AG04449 (cell line): ENCODE measurements at regions of chr1 and their contacts with region 1.

Region 1: DNA sequence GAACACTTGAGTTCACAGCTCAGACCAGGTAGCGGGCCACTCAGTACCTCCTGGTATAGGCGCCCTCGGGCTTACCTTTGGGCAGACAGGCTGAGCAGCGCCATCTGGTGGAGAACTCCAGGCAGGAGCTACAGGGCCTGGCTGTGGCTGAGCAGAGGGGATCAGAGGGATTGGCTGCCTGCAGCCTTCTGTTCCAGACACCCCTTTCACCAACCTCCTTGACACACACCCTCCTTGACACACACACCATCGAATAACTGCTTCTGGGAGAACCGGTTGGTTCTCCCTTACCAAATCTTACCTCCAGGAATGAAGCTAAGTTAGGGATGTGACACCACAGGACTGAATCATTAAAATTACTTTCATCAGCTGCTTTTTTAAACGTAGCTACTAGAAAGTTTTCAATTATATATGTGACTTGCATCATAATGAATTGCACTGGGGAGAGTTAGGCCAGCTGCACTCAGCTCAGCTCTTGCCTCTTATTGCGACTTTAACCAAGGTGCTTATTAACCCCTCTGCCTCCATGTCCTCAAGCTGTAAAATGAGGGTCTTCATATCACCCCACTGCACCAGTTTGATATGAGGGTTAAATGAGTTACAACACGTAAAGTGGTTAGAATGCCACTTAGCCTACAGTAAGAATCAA is 6.6 kb downstream of the LIN28A start:
- DNase-seq: no peak
- H3K4me3 ChIP-seq: no peak overlapping the region
- CTCF ChIP-seq: peak; percentile 97

Region 2: DNA sequence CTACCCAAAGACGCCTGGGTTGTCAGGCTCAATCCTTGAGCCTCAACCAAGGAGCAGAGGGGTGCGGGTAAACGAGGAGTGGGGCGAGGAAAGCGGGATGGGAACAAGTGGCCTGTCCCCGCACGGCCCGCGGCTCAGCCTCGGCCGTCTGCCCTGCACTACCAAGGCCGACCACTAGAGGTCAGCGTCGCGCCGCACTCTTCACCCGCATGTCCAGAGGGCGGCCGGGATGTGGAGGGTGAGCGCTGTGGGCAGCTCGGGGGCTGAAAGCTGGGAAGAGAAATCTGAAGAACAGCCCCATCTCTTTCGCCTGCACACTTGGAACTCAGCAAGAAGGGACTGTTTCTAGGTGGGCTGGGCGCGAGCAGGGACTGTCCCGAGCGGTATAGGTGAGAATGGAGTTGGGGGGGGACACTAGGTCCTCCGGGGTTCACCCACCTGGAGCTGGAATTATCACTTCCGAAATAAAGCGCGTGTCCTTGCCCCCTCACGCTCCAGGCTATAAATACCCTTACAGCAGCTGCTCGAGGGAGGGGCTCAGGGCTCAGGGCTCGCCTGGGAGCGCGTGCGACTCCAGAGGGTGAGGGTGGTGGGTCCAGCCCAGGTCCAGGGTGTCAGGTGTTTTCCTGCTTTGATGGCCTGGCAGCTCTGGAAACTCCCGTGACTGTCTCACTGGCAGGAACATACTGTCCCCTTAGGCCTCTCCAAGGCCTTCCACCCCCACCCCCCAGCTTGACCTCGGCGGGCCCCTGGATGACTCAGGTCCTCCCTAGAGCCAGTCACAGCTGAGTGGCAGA is 381.1 kb before region 1 on chr1:
- CTCF ChIA-PET with region 1: interaction called, 10 read pairs
- POLR2A ChIA-PET with region 1: no interaction called
- DNase-seq: no peak
- H3K4me3 ChIP-seq: peak overlapping the region; percentile 79
- CTCF ChIP-seq: peak; percentile 97

Region 3: GRCh38 chr1:26169669-26170471 is 247.4 kb before region 1 on chr1 and contains the start of gene ZNF593:
- CTCF ChIA-PET with region 1: interaction called, 11 read pairs
- POLR2A ChIA-PET with region 1: no interaction called
- DNase-seq: peak; percentile 19
- H3K4me3 ChIP-seq: peak within 1 kb of the TSS; percentile 93
- CTCF ChIP-seq: peak; percentile 100

Region 4: GRCh38 chr1:26363549-26364448 is 53.4 kb before region 1 on chr1:
- CTCF ChIA-PET with region 1: interaction called, 30 read pairs
- POLR2A ChIA-PET with region 1: no interaction called
- DNase-seq: no peak
- H3K4me3 ChIP-seq: no peak overlapping the region
- CTCF ChIP-seq: peak; percentile 92

Region 5: GRCh38 chr1:26391450-26391849 is 25.8 kb before region 1 on chr1:
- CTCF ChIA-PET with region 1: interaction called, 41 read pairs
- POLR2A ChIA-PET with region 1: no interaction called
- DNase-seq: no peak
- H3K4me3 ChIP-seq: no peak overlapping the region
- CTCF ChIP-seq: peak; percentile 76

Region 6: GRCh38 chr1:26440259-26440658 is 23.0 kb after region 1 on chr1:
- CTCF ChIA-PET with region 1: interaction called, 91 read pairs
- POLR2A ChIA-PET with region 1: no interaction called
- DNase-seq: no peak
- H3K4me3 ChIP-seq: no peak overlapping the region
- CTCF ChIP-seq: no peak

Region 7: DNA sequence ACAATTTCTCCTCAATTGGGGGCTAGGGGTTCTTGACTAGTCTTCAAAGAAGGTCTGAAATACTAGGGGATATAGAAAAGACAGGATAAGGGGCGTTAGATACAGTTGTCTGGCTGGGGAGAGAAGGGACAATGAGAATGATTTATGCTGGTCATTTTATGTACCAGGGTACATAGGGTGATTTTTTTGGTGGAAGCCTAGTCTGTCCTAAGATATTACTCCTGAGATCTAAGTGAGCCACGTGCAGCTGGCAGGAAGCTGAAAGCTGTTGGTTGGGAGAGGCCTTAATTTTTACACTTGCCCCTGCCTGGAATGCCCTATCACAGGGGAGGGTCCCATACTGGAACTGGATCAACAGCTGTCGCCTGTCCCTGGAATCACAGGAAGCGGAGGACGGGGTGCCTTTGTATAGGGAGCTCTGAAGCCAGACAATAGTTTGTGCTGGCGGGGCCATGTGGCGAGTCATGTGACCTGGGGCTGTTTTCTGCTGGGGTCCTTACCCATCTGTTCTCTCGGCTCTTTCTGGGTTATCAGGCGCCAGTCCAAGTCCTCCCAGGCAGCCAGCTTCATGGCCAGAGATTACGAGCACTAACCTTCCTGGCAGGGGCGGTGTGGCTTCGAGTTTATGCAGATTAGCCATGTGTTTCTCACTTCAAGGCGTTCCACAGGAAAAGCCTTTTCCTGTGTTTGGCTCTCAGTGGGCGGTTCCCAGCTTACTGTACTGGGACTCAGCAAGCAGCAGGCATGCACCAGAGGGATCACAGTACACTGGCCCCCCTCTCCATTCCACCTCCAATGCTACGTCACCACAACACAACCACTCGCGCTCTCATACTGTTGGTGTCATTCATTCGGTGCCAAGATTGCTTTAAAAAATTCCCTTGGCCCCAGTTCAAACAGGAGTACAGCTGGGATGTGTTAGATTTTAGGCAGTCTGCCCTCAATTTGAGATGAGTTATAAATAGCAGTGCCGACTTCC is 306.1 kb after region 1 on chr1:
- CTCF ChIA-PET with region 1: no interaction called
- POLR2A ChIA-PET with region 1: no interaction called
- DNase-seq: peak; percentile 96
- H3K4me3 ChIP-seq: no peak overlapping the region; the same call in 1 of the 2 replicates
- CTCF ChIP-seq: no peak